ENCODE measurements at regions of chr5 and their contacts with region 1.

Region 1: DNA sequence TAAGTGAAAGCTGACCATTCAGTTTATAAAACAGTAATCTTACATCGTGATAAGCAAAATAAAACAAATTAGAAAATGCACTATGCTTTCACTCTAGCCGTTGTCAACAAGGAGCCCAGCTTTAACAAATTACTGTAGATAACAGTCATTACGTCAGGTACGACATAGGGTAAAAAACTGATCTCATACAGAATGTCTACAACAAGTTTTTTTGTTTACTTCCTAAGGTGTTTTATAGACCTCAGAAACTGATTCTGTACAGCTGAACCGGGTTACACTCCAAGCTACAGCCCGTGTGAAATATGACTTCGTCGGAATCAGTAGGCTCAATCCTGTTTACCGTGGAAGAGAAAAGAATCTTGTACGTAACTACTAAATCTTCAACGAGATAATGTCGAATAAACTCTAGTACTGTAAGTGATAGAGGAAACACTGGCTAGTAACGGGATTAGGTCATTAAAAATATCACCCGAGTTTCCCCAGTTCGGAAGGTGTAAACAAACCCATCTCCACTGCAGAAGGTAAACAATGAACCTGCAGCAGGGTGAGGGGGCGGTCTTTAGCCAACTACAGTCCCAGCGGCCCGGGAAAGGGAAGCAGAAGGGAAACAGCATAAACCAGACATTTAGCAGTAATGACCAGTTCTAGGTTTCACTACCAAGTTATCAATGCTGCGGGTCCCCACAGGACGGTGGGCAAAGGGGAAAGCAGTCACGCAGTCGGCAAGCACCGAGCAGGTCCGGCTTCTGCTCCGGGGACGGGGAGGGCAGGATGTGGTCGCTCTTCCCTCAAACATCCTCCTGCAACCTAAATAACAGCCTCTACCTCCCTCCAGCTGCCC is 1.1 kb downstream of the RICTOR start:
- DNase-seq: peak; percentile 72 to 83
- ATAC-seq: peak; percentile 53 to 69 (median 60)
- H3K4me3 ChIP-seq: peak overlapping the region; percentile 60
- H3K4me3 Mint-ChIP-seq: peak overlapping the region; percentile 96
- H3K27ac ChIP-seq: peak overlapping the region; percentile 93
- H3K27ac Mint-ChIP-seq: peak overlapping the region; percentile 97 to 99
- H3K4me1 ChIP-seq: peaks cover 3% of the 10 kb centered on the region
- H3K4me1 Mint-ChIP-seq: peaks cover 52 to 54% of the 10 kb centered on the region in 2 donors
- H3K27me3 ChIP-seq: peaks cover 8% of the 10 kb centered on the region
- H3K27me3 Mint-ChIP-seq: no peaks in the 10 kb centered on the region
- CTCF ChIP-seq: no peak

Region 2: GRCh38 chr5:39058178-39058921 is 14.8 kb before region 1 on chr5:
- intact Hi-C with region 1: loop called (anchors 2 kb)
- DNase-seq: no peak
- ATAC-seq: peak; percentile 50 to 61 (median 58)
- H3K4me3 ChIP-seq: peak overlapping the region; percentile 30
- H3K4me3 Mint-ChIP-seq: peak overlapping the region; percentile 79
- H3K27ac ChIP-seq: peak overlapping the region; percentile 45
- H3K27ac Mint-ChIP-seq: peak overlapping the region; percentile 79 to 86
- H3K4me1 ChIP-seq: no peaks in the 10 kb centered on the region
- H3K4me1 Mint-ChIP-seq: peaks cover 53 to 61% of the 10 kb centered on the region in 2 donors
- H3K27me3 ChIP-seq: no peaks in the 10 kb centered on the region
- H3K27me3 Mint-ChIP-seq: no peaks in the 10 kb centered on the region
- CTCF ChIP-seq: no peak

Region 3: DNA sequence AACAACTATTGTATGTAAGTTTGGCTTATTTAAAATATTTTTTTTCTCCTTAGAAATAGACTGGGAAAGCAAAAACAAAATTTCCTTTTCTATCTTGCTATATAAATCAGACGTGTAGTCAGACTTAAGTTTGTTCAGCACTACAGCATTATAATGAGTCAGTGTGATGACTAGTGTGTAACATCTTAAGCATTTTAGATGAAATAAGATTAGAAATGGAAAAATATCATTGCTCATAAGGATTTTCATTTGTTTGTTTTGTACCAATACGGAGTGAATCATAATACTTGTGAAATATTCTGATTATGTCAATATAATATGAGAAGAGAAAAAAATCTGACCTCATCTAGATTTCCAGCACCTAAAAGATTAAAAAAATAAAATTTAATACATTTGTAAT is 65.7 kb after region 1 on chr5:
- intact Hi-C with region 1: no loop called
- DNase-seq: no peak
- ATAC-seq: no peak
- H3K4me3 ChIP-seq: no peak overlapping the region
- H3K4me3 Mint-ChIP-seq: no peak overlapping the region
- H3K27ac ChIP-seq: no peak overlapping the region
- H3K27ac Mint-ChIP-seq: no peak overlapping the region
- H3K4me1 ChIP-seq: no peaks in the 10 kb centered on the region
- H3K4me1 Mint-ChIP-seq: peaks cover 0 to 14% of the 10 kb centered on the region in 2 donors
- H3K27me3 ChIP-seq: no peaks in the 10 kb centered on the region
- H3K27me3 Mint-ChIP-seq: no peaks in the 10 kb centered on the region
- CTCF ChIP-seq: no peak

Measured in natural killer cell (primary cell).